ENCODE measurements at regions of chr1 and their contacts with region 1.

Region 1: DNA sequence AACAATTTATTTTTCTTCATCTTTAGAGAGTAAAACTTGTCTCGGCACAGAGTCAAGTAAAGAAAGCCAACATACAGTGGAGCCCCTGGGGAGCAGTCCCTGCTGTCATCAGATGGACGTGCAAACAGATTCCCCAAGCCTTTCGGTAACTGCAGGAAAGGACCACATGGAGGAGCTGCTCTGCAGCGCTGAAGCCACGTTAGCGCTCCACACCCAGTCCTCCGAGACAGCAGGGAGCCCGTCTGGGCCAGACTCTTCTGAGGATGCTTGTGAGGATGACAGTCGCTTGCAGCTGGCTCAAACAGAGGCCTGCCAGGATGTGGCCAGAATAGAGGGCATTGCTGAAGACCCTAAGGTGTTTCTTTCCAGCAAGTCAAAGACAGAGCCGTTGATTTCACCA is 77.1 kb upstream of the SCCPDH start:
- DNase-seq: no peak
- H3K4me3 ChIP-seq: no peak overlapping the region
- H3K27me3 ChIP-seq: no peaks in the 10 kb centered on the region
- CTCF ChIP-seq: peak; percentile 70

Region 2: DNA sequence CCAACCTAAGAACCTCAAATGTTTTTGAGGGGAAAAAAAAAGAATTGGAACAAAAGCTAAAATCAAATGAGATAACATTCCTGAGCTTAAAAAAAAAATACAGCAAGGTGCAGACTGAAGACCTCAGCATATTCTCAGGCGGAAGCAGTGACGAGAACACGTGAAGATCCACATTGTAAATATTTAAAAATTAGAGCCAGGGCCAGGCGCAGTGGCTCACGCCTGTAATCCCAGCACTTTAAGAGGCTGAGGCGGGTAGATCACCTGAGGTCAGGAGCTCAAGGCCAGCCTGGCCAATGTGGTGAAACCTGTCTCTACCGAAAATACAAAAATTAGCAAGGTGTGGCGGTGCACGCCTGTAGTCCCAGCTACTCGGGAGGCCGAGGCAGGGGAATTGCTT is 96.7 kb before region 1 on chr1:
- CTCF ChIA-PET with region 1: interaction called, 3 read pairs
- POLR2A ChIA-PET with region 1: interaction called, 16 read pairs
- DNase-seq: no peak
- H3K4me3 ChIP-seq: no peak overlapping the region
- H3K27me3 ChIP-seq: no peaks in the 10 kb centered on the region
- CTCF ChIP-seq: no peak

Region 3: DNA sequence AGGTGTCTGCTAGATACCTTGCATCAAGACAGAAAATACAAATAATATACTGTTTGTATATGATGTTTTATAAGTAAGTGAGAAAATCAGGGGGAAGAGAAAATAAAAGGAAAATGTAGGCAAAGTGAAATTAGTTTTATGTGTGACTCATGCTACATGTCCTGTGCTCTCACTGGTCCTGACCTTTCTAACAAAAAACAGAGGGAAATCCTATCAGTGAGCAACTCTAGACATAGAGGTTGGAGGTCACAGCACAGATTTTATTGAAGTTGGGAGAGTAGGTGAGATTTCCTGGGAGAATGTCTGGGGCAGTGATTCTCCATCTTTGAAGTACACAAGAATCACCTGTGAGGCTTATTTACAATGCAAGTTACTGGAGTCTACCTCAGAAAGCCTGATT is 86.6 kb after region 1 on chr1:
- CTCF ChIA-PET with region 1: no interaction called
- POLR2A ChIA-PET with region 1: interaction called, 12 read pairs
- DNase-seq: no peak
- H3K4me3 ChIP-seq: no peak overlapping the region
- H3K27me3 ChIP-seq: no peaks in the 10 kb centered on the region
- CTCF ChIP-seq: no peak

Measured in BJ (cell line).